CD8-positive, alpha-beta memory T cell (primary cell): ENCODE measurements at regions of chr2 and their contacts with region 1.

Region 1: DNA sequence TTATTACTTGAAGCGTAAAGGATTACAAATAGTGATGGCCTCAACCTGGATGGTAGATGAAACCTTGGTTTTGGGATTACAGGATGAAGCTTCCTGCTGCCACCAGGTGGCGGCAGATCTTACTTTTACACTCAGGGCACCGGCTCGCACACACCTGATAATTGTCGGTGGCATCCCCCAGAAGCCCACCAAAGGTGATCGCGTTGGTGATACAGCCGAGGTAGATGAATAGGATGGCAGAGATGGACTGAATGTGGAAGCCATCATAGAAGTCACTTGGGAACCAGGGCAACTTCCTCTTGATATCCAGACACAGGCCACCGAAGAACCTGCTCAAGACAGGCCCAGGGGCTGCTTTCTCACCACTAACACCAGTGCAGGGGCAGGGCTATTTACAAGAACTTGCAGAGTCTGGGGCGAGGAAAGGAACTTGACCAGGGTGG is 51.8 kb downstream of the MTHFD2 start:
- DNase-seq: peak; percentile 34 to 71 (median 43)
- H3K4me3 ChIP-seq: no peak overlapping the region
- H3K4me3 Mint-ChIP-seq: peak overlapping the region in 2 of 7 donors; percentile 2 to 44
- H3K27ac ChIP-seq: no peak overlapping the region
- H3K27ac Mint-ChIP-seq: peak overlapping the region in 2 of 8 donors; percentile 27 to 84
- H3K4me1 ChIP-seq: no peaks in the 10 kb centered on the region
- H3K4me1 Mint-ChIP-seq: peaks cover 2 to 4% (median 4%) of the 10 kb centered on the region in 3 donors
- H3K27me3 ChIP-seq: no peaks in the 10 kb centered on the region
- H3K27me3 Mint-ChIP-seq: peaks cover 0 to 3% of the 10 kb centered on the region in 2 donors

Region 2: DNA sequence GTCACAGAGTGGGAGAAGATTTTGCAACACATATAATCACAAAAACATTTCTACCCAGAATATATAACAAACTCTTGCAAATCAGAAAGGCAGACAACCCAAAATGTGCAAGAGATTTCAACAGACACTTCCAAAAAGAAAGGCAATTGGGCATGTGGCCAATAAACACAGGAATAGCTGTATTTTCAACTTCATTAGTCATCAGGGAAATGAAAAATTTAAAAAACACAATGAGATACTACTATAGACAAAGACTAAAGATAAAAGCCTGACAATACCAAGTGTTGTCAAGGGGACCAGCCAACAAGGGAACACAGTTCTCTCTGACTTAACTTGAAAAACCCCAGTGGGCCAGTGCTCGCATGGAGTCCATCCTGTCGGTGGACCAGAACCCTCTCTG is 11.3 kb before region 1 on chr2:
- CTCF ChIA-PET with region 1: interaction called, 22 read pairs
- POLR2A ChIA-PET with region 1: no interaction called
- DNase-seq: no peak
- H3K4me3 ChIP-seq: no peak overlapping the region
- H3K4me3 Mint-ChIP-seq: no peak overlapping the region
- H3K27ac ChIP-seq: no peak overlapping the region
- H3K27ac Mint-ChIP-seq: no peak overlapping the region
- H3K4me1 ChIP-seq: no peaks in the 10 kb centered on the region
- H3K4me1 Mint-ChIP-seq: no peaks in the 10 kb centered on the region
- H3K27me3 ChIP-seq: no peaks in the 10 kb centered on the region
- H3K27me3 Mint-ChIP-seq: no peaks in the 10 kb centered on the region

Region 3: GRCh38 chr2:74281141-74281975 is 31.1 kb after region 1 on chr2:
- CTCF ChIA-PET with region 1: no interaction called
- POLR2A ChIA-PET with region 1: no interaction called
- DNase-seq: no peak
- H3K4me3 ChIP-seq: no peak overlapping the region
- H3K4me3 Mint-ChIP-seq: no peak overlapping the region
- H3K27ac ChIP-seq: no peak overlapping the region
- H3K27ac Mint-ChIP-seq: peak overlapping the region in 1 of 8 donors; percentile 51
- H3K4me1 ChIP-seq: no peaks in the 10 kb centered on the region
- H3K4me1 Mint-ChIP-seq: no peaks in the 10 kb centered on the region
- H3K27me3 ChIP-seq: no peaks in the 10 kb centered on the region
- H3K27me3 Mint-ChIP-seq: peaks cover 0 to 6% of the 10 kb centered on the region in 2 donors

Region 4: DNA sequence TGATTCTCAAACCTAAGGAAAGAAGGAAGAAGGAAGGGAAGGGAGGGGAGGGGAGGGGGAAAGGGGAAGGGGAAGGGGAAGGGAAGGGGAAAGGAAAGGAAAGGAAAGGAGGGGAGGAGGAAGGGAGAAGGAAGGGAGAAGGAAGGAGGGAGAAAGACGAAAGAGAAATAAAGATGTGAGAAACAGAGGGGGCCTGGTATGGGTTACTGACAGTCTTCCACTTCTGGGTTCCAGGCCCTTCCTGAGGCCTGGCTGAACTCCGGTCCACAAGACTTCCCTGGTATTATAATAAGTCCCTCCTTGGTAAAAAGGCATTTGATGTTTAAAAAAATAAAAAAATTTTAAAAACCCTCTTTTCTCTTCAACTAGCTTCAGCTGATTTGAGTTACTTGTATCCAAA is 75.6 kb after region 1 on chr2:
- CTCF ChIA-PET with region 1: interaction called, 12 read pairs
- POLR2A ChIA-PET with region 1: no interaction called
- DNase-seq: no peak
- H3K4me3 ChIP-seq: no peak overlapping the region
- H3K4me3 Mint-ChIP-seq: no peak overlapping the region
- H3K27ac ChIP-seq: no peak overlapping the region
- H3K27ac Mint-ChIP-seq: no peak overlapping the region
- H3K4me1 ChIP-seq: no peaks in the 10 kb centered on the region
- H3K4me1 Mint-ChIP-seq: peaks cover 11 to 15% (median 14%) of the 10 kb centered on the region in 3 donors
- H3K27me3 ChIP-seq: no peaks in the 10 kb centered on the region
- H3K27me3 Mint-ChIP-seq: no peaks in the 10 kb centered on the region

Region 5: DNA sequence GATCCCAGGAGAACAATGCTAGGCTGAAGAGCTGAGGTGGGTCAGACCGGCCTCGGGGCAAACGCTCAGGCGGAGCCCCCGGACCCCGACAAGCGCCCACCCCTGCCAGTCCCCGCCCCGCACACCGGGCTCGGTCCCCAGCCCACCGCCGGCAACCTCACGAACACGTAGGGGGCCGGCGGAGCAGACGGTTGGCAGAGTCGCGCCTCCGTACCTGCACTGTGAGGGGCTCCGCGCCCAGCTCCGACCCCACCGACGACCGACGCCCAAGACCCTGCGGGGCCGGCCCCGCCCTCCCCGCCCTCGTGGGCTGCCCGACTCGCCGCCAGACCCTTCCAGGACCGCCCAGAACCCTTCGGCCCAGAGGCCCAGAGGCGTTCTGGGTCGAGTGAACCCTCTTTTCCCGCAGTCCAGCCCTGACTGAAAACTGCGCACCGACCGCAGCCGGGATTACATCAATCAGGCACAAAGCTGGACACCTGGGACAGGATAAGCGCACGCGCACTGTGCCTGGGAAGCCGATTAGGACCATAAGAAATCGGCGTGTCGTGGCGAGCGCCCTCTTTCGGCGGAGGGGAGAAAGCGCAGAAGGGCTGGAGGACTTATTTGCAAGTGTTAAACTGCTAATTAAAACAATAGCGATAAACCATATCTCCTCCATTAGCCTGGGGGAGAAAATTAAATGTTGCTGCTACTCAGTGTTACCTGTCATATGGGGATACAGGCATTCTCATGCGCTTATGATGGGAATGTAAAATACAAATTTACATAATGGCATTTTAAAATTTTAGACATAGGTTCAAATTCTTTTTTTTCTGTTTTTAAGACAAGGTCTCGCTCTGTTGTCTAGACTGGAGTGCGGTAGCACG is 141.6 kb after region 1 on chr2:
- CTCF ChIA-PET with region 1: interaction called, 11 read pairs
- POLR2A ChIA-PET with region 1: no interaction called
- DNase-seq: peak; percentile 91 to 96 (median 93)
- H3K4me3 ChIP-seq: peak overlapping the region; percentile 79
- H3K4me3 Mint-ChIP-seq: peak overlapping the region in 5 of 7 donors; percentile 93 to 100 (median 97)
- H3K27ac ChIP-seq: peak overlapping the region; percentile 85
- H3K27ac Mint-ChIP-seq: peak overlapping the region; percentile 81 to 100 (median 100)
- H3K4me1 ChIP-seq: peaks cover 39% of the 10 kb centered on the region
- H3K4me1 Mint-ChIP-seq: peaks cover 0 to 8% (median 6%) of the 10 kb centered on the region in 3 donors
- H3K27me3 ChIP-seq: no peaks in the 10 kb centered on the region
- H3K27me3 Mint-ChIP-seq: peaks cover 4 to 7% of the 10 kb centered on the region in 2 donors

Region 6: GRCh38 chr2:74472086-74472944 is 222.1 kb after region 1 on chr2 and contains the start of gene MRPL53:
- CTCF ChIA-PET with region 1: no interaction called
- POLR2A ChIA-PET with region 1: no interaction called
- DNase-seq: peak; percentile 94 to 97 (median 95)
- H3K4me3 ChIP-seq: peak within 1 kb of the TSS; percentile 95
- H3K4me3 Mint-ChIP-seq: peak within 1 kb of the TSS; percentile 93 to 98 (median 96)
- H3K27ac ChIP-seq: peak within 1 kb of the TSS; percentile 83
- H3K27ac Mint-ChIP-seq: peak within 1 kb of the TSS; percentile 97 to 100 (median 99)
- H3K4me1 ChIP-seq: peaks cover 22% of the 10 kb centered on the region
- H3K4me1 Mint-ChIP-seq: peaks cover 21 to 27% (median 25%) of the 10 kb centered on the region in 3 donors
- H3K27me3 ChIP-seq: no peaks in the 10 kb centered on the region
- H3K27me3 Mint-ChIP-seq: peaks cover 0 to 5% of the 10 kb centered on the region in 2 donors
- total RNA-seq, gene MRPL53: 115 to 118 TPM